Heart right ventricle (tissue), 16 donors: ENCODE measurements at regions of chr6 and their contacts with region 1.

Region 1: GRCh38 chr6:53492860-53493634 is 51.9 kb downstream of the GCLC start:
- DNase-seq: no peak
- ATAC-seq: peak; percentile 38 to 85 (median 70)
- H3K4me3 ChIP-seq: peak overlapping the region in 5 of 10 donors; percentile 16 to 31 (median 25)
- H3K27ac ChIP-seq: no peak overlapping the region
- H3K4me1 ChIP-seq: peaks cover 0 to 12% (median 5%) of the 10 kb centered on the region in 9 donors
- H3K27me3 ChIP-seq: no peaks in the 10 kb centered on the region
- CTCF ChIP-seq: peak; percentile 51 to 87 (median 82)

Region 2: DNA sequence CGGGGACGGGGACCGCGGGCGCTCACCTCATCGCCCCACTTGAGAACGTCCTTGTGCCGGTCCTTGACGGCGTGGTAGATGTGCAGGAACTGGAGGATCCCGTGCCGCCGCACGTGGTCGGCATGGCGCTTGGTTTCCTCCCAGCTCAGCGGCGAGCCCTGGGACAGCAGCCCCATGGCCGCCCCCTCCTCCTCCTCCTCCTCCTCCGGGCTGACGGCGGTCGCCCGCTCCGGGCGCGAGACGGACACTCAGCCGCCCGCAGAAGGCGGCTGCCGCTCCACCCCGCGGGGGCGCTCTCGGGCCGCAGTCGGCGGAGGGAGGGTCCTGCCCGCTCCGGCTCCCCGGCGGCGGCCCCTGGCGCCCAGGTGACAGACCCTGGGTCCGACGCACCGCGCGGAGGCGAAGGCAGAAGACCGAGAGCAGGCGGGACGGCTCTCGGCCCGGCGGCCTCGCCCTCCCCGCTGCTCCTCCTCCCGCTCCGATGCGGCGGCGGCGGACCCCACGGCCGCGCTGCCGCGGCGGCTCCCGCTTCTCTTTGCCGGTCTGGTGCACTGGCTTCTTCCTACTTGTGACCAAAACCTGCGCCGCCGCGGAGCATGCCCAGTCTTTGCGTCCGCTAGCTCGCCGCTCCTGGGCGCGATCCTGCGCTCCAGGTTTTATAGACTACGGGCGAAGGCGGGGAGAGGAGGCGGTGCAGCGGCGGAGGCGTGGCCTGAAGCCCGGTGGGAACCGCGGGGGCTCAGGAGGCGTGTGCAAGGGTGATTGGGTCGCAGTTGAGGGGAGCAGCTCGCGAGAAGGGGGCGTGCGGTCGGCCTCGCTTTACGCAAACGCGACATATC is 51.6 kb after region 1 on chr6 and contains the start of gene GCLC:
- intact Hi-C with region 1: loop called in 1 of 10 experiments (anchors 10 kb)
- DNase-seq: peak; percentile 95
- ATAC-seq: peak; percentile 80 to 88 (median 83)
- H3K4me3 ChIP-seq: peak within 1 kb of the TSS; percentile 55 to 94 (median 82)
- H3K27ac ChIP-seq: peak within 1 kb of the TSS; percentile 46 to 99 (median 95)
- H3K4me1 ChIP-seq: peaks cover 0 to 56% (median 42%) of the 10 kb centered on the region in 9 donors
- H3K27me3 ChIP-seq: no peaks in the 10 kb centered on the region
- CTCF ChIP-seq: peak; percentile 49 to 88 (median 70)
- total RNA-seq, gene GCLC: 13.9 to 42.8 (median 34.6) TPM

Region 3: GRCh38 chr6:53725791-53726431 is 232.9 kb after region 1 on chr6:
- intact Hi-C with region 1: loop called in 9 of 10 experiments (anchors 1 to 5 kb)
- DNase-seq: peak; percentile 76 to 79
- ATAC-seq: peak; percentile 79 to 93 (median 89)
- H3K4me3 ChIP-seq: no peak overlapping the region
- H3K27ac ChIP-seq: no peak overlapping the region
- H3K4me1 ChIP-seq: peaks cover 0 to 10% (median 0%) of the 10 kb centered on the region in 9 donors
- H3K27me3 ChIP-seq: peaks cover 0 to 6% (median 0%) of the 10 kb centered on the region in 7 donors
- CTCF ChIP-seq: peak; percentile 90 to 97 (median 95)